BJ (cell line): ENCODE measurements at regions of chr3 and their contacts with region 1.

Region 1: DNA sequence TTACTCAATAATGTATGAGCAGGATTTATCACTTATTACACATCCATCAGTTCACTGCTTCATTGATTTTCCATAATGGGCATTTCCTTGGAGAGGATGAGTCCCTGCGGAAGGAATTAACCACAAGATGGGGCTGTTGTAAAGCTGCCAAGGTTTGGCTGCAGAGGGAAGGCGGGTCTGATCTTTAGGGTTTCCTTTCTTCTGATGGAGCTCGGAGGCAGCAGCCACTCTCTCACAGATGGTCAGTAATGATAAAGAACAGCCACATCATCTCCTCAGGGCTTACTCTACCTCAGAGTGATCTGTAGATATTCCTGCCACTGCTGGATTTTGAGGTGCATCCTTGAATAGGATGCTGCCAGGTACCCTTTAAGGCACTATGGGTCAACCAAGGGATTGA is 115.2 kb downstream of the USP13 start:
- DNase-seq: peak; percentile 3
- H3K4me3 ChIP-seq: no peak overlapping the region
- H3K27me3 ChIP-seq: no peaks in the 10 kb centered on the region
- CTCF ChIP-seq: peak; percentile 72

Region 2: GRCh38 chr3:179750720-179751328 is 17.3 kb before region 1 on chr3:
- CTCF ChIA-PET with region 1: interaction called, 12 read pairs
- POLR2A ChIA-PET with region 1: no interaction called
- DNase-seq: no peak
- H3K4me3 ChIP-seq: no peak overlapping the region
- H3K27me3 ChIP-seq: no peaks in the 10 kb centered on the region
- CTCF ChIP-seq: peak; percentile 63

Region 3: GRCh38 chr3:179811321-179812095 is 43.4 kb after region 1 on chr3:
- CTCF ChIA-PET with region 1: interaction called, 11 read pairs
- POLR2A ChIA-PET with region 1: no interaction called
- DNase-seq: peak; percentile 63
- H3K4me3 ChIP-seq: no peak overlapping the region
- H3K27me3 ChIP-seq: no peaks in the 10 kb centered on the region
- CTCF ChIP-seq: peak; percentile 72